ENCODE measurements at regions of chr6 and their contacts with region 1.

Region 1: DNA sequence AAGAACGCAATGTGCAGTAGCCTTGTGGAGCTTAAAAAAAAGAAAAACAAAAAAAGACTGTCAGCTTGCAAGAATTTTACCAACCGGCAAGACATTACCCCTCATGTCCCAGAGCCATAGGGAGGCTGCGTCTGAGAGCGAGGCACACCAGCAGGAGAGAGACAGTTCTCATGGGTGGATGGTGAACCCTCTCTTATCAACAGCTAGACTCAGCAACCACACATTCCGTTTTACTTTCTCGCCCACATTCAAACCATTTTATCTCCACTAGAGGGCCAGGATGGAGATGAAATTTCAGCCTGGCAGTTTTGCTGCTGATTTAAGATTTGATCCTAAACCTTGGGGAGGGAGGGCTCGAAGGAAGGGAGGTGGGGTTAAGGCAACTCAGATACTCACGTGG is 247.0 kb downstream of the ATXN1 start:
- DNase-seq: peak; percentile 37
- ATAC-seq: peak; percentile 43
- H3K4me3 Mint-ChIP-seq: no peak overlapping the region
- H3K27ac Mint-ChIP-seq: no peak overlapping the region
- H3K4me1 Mint-ChIP-seq: peaks cover 69% of the 10 kb centered on the region
- H3K27me3 Mint-ChIP-seq: no peaks in the 10 kb centered on the region

Region 2: DNA sequence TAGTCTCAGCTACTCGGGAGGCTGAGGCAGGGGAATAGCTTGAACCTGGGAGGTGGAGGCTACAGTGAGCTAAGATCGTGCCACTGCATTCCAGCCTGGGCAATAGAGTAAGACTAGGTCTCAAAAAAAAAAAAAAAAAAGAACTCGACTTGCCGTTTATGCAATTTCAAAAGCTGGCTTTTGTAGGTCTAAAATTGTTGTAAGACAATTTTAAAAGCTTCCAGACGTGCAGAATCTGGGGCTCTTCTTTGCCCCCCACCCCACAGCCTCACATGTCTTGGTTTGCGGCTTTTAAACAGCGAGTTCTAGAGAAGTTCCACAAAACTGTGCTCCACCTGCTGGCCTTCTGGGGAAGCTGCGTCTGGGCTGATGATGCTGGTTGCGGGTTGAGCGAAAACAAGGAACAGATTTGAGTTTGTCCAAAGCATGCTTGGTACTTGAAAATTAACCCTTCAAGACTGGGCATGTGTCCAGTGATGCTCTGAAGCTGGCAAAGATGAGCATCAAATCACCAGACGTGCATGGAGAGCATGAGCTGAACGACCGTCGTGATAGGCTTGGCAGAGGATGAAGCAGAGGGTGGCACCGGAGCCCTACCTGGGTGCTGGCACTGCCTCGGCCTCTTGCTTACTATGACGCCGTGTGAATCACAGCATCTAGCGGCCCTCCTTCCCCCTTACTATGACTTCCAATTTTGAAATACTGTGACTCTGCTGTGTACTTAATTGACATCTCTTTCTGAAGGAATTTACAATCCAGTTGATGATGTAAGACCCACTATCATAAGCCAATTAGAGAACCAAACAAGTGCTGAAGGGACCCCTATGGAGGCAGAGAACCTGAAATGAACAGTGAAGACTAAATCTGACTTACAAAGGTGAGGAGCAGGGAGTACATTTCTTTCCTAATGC is 104.5 kb before region 1 on chr6:
- CTCF ChIA-PET with region 1: interaction called, 12 read pairs
- POLR2A ChIA-PET with region 1: interaction called, 16 read pairs
- intact Hi-C with region 1: no loop called
- DNase-seq: peak; percentile 77
- ATAC-seq: peak; percentile 50
- H3K4me3 Mint-ChIP-seq: no peak overlapping the region
- H3K27ac Mint-ChIP-seq: peak overlapping the region; percentile 30
- H3K4me1 Mint-ChIP-seq: peaks cover 41% of the 10 kb centered on the region
- H3K27me3 Mint-ChIP-seq: no peaks in the 10 kb centered on the region

Region 3: DNA sequence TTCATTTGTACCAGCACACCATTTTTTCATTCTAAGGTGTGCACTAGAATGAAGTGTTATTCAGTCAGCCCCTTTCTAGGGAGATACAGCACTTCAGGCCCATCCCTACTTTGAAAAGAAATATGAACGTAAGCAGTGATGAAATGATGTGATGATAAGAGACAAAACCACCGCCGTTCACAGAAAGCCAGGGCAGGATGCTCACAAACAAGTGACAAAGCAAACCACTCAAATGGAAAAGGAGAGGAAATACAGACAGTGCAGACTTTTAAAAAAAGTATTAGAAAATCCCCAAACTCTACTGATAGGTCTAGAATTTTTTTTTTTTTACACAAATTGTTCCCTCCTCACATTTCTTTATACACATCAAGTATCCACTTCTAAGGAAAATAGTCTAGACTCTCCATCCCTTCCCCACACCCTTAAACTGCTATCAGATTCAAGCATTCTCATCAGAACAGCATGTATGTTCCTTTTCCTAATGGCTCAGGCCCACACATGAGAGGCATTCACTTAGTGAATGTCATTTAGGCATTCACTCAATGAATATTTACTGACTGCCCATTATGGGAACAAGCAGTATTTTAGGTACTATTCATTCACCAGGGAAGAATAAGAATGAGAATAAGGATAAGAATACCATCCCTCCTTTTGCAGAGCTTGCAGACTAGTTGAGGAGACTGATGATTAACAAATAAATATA is 32.4 kb before region 1 on chr6:
- CTCF ChIA-PET with region 1: interaction called, 10 read pairs
- POLR2A ChIA-PET with region 1: no interaction called
- intact Hi-C with region 1: no loop called
- DNase-seq: peak; percentile 74
- ATAC-seq: peak; percentile 85
- H3K4me3 Mint-ChIP-seq: peak overlapping the region; percentile 10
- H3K27ac Mint-ChIP-seq: peak overlapping the region; percentile 92
- H3K4me1 Mint-ChIP-seq: peaks cover 81% of the 10 kb centered on the region
- H3K27me3 Mint-ChIP-seq: no peaks in the 10 kb centered on the region

Region 4: DNA sequence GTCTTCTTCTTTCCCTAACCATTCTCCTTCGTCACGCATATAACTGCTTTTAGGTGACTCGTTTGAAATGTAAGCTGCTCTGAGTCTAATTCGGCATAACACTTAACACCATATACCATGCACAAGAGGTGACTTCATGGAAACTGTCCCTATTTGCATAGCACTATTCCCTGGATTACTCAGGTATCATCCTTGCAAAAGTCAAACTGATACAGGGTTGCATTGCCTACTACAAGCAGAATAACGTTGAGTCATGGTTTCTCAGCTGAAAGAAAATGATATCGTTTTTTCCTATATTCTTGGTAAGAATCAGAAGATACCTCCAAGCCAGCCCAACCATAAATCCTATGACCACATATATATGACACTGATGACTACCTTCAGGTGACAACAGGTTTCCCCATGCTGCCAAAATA is 19.5 kb after region 1 on chr6:
- CTCF ChIA-PET with region 1: interaction called, 5 read pairs
- POLR2A ChIA-PET with region 1: no interaction called
- intact Hi-C with region 1: loop called in 1 of 2 experiments (anchors 1 kb)
- DNase-seq: no peak
- ATAC-seq: peak; percentile 89
- H3K4me3 Mint-ChIP-seq: no peak overlapping the region
- H3K27ac Mint-ChIP-seq: peak overlapping the region; percentile 75
- H3K4me1 Mint-ChIP-seq: peaks cover 29% of the 10 kb centered on the region
- H3K27me3 Mint-ChIP-seq: no peaks in the 10 kb centered on the region

Region 5: GRCh38 chr6:16770701-16771569 is 256.7 kb after region 1 on chr6:
- CTCF ChIA-PET with region 1: interaction called, 53 read pairs
- POLR2A ChIA-PET with region 1: no interaction called
- intact Hi-C with region 1: no loop called
- DNase-seq: peak; percentile 89
- ATAC-seq: peak; percentile 70
- H3K4me3 Mint-ChIP-seq: no peak overlapping the region
- H3K27ac Mint-ChIP-seq: no peak overlapping the region
- H3K4me1 Mint-ChIP-seq: peaks cover 49% of the 10 kb centered on the region
- H3K27me3 Mint-ChIP-seq: no peaks in the 10 kb centered on the region

Measured in activated CD4-positive, alpha-beta T cell treated with anti-CD3 and anti-CD28 coated beads for 36 hours (primary cell).